ENCODE measurements at regions of chr10 and their contacts with region 1.

Region 1: GRCh38 chr10:35126530-35127296 is at the start of gene CREM:
- DNase-seq: peak; percentile 99
- ATAC-seq: peak; percentile 98
- total RNA-seq, gene CREM: 63.7 TPM

Region 2: GRCh38 chr10:35090162-35090954 is 36.4 kb before region 1 on chr10 and contains the start of gene CUL2:
- intact Hi-C with region 1: loop called (anchors 2 kb)
- DNase-seq: peak; percentile 93
- ATAC-seq: peak; percentile 98
- total RNA-seq, gene CUL2: 39.6 TPM

Region 3: DNA sequence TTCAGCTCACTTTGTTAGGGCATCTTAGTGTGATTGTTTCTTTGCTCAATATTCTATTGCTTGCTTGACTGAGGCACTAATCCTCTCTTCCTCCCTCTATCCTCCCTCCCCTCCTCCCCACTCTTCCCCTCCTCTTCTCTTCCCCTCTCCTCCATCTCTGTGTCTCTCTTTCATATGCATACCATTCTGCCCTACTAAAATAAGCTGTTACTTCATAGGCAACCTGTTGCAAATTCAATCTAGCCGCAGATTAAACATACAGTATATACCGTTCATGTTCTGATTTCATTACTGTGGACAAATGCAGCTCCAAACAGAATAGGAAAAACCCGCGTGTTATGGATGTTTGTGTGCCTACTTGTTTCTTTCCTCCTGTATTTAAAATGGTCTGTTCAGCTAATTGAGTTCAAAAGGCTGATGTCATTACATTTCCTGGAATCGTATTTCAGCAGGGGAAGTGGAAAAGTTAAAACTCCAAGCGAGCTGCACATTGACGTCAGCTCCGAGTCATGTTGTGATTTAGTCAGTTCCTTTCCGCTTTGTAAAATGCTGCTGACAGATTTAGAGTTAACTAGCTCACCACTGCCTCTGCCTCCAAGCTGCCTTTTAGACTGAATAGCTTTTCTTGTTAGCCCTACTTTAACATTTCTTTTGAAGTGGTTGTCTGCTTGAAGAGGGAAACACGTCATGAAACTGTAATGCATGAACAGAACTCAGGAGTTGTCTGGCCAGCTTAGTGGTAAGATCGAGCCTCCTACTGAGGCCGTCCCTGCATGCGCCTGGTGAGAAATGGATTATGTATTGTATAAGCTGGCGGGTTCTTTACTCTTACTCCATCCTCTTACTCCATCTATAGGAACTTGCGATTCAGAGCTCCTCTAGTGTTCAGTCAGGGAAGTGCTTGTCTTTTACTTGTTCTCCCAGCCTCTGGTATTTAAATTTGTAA is 68.9 kb after region 1 on chr10:
- intact Hi-C with region 1: loop called (anchors 1 kb)
- DNase-seq: no peak
- ATAC-seq: peak; percentile 87